ENCODE measurements at regions of chrX and their contacts with region 1.

Region 1: DNA sequence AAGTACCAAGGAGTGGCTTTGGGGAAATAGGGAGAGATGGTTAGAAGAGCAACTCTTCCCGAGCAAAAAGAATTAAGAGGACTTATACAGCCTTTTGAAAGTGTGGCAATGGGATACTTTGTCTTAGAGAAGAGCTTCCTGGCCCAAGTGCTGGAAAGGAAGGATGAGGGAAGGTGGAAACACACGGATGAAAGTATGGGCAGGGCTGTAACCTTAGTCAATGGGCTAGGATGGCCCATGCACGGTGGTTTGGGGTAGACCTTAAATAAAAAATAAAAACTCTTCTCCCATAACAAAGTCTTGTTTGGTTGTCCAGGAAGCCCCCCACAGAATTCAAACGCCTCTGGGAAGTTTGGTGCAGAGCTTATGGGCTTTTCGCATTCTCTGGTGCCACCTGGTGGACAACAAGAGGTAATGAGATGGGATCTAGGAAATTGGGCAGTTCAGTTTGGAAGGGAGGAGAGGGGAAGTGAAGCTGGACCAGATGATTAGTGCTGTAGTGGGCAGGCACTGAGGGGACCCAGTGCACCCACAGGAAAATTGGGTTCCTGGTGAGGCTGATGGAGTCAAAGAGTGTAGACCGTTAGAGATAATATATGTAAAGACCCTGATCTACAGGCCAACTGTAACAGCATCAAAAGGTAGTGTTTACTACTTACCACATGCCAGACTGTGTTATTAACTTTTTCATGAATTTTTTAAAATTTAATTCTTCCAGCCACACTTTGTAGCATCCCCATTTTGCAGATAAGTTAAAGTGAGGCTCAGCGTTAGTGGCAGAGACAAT is 13.8 kb upstream of the ENOX2 start:
- DNase-seq: peak; percentile 79

Region 2: DNA sequence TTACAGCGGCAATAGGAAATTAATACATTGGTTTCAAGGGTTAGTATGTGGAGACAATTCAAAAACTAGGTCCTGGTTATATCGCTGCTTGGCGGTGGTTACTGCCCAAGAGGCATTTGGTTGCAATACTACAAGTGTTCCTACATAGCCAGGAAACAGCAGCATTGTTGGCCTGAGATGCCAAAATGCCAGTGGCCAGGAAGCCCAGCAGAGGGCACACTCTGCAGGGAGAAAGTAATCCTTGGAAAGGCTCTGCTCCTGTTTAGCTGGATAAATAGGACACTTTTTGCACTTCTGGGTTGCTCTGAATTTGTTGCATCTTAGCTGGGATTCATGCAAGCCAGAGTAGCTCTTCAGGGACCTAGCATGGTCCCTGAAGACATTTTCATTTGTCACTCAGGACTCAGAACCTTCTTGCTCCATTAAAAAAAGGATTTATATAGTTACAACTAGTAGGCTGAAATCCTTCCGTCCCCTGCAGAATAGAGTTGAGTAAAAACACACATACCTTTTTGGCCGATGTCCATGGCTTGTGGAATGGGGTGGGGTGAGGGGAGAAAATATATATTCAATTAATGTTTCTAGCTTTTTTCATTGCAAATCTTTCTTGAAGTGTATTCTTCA is 523.3 kb before region 1 on chrX:
- CTCF ChIA-PET with region 1: interaction called, 19 read pairs
- POLR2A ChIA-PET with region 1: no interaction called
- DNase-seq: peak; percentile 80

Region 3: GRCh38 chrX:130575831-130576389 is 340.9 kb before region 1 on chrX:
- CTCF ChIA-PET with region 1: interaction called, 21 read pairs
- POLR2A ChIA-PET with region 1: interaction called, 3 read pairs
- DNase-seq: peak; percentile 70

Region 4: GRCh38 chrX:130734713-130735112 is 182.1 kb before region 1 on chrX:
- CTCF ChIA-PET with region 1: interaction called, 10 read pairs
- POLR2A ChIA-PET with region 1: no interaction called
- DNase-seq: no peak

Region 5: DNA sequence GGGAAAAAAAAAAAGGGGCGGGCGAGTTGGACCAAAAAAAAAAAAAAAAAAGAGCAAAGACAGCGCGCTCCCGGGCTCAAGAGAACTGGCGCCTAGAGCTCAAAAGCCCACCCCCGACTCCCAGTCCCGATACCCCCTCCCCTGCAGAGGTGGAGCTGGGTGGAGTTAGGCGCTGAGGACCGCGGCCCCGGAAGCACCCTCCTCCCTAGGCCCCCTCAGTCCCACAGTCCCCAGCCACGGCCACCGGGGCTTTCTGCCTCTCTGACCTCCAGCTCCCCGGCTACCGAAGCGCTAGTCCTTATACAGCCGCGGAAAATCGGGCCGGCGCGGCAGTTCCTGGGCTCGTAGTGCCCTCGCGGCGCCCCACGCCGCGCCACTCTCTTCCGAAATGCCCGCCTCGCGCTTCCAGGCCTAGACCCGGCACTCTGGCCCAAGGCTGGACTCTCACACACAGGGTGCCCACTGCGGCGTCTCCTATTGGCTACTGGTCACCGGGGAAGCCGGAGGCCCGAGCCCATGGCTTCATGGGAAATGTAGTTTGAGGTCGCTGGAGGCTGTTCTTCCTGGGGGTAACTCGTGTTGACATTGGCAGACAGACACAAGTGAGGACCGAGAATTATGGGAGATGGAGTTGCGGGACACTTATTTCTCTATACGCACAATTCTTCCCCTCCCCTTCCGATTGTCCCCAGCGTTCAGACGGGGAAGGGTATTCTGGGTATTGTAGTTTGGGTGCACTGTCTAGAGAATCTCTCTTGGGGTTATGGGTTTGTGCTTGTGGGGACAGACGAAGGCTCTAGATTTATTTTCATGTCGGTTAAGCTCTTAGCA is 13.8 kb before region 1 on chrX and contains the start of gene ENOX2:
- CTCF ChIA-PET with region 1: interaction called, 12 read pairs
- POLR2A ChIA-PET with region 1: no interaction called
- DNase-seq: peak; percentile 92

Region 6: GRCh38 chrX:131213400-131213799 is 296.6 kb after region 1 on chrX:
- CTCF ChIA-PET with region 1: no interaction called
- POLR2A ChIA-PET with region 1: no interaction called
- DNase-seq: no peak

Measured in HEK293T (cell line).